Cardiac septum (tissue), 1 donor: ENCODE measurements at regions of chr6 and their contacts with region 1.

Region 1: DNA sequence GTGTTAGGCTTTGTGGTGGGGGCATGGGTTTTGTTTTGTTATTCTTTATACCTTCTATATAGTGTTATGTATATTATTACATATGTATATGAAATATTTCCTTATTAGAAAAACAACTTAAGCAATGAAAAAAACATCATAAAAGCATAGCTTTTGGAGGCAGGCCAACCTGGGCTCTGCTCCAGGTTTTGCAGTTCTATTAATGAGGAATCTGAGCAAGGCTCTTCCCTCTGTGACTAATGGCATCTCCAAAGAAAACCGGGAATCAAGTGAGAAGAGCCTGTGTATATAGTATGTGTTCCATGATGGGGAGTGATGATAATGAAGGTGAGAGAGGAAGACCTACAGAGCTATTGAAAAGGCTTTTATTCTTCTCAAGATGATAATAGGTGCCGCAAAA is 291.1 kb downstream of the CLIC5 start:
- DNase-seq: no peak

Region 2: GRCh38 chr6:45613656-45614055 is 110.9 kb before region 1 on chr6:
- intact Hi-C with region 1: no loop called
- DNase-seq: no peak

Region 3: DNA sequence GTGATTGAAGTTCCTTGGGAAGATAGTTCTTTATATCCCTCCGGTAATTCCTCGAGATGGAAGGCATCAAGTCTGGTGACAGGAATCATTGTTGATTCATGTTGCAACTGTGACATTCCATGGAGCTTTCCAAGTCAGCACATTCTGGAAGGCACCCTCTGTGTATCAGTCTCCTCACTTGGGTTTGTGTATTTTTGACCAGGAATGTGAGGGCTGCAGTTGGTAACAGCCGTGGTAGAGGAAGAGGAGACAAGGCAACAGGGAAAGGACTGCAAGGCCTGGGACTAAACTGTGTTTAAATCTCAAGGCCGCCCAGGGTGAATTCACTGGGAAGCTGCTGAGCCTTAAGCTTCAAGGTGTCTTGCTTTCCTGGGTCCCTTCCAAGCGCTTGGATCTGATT is 192.2 kb after region 1 on chr6:
- intact Hi-C with region 1: loop called (anchors 10 kb)
- DNase-seq: no peak